SK-N-SH (cell line): ENCODE measurements at regions of chr11 and their contacts with region 1.

Region 1: GRCh38 chr11:66311965-66312548 is 4.8 kb downstream of the CD248 start:
- DNase-seq: peak; percentile 88
- H3K4me3 ChIP-seq: peak overlapping the region; percentile 59 to 70
- H3K27ac ChIP-seq: peak overlapping the region; percentile 94 to 96
- H3K4me1 ChIP-seq: peaks cover 11 to 49% of the 10 kb centered on the region in 2 experiments; a peak in 2 of 4 replicates
- H3K27me3 ChIP-seq: no peaks in the 10 kb centered on the region
- CTCF ChIP-seq: peak; percentile 98
- EP300 ChIP-seq: no peak
- RAD21 ChIP-seq: peak; percentile 97

Region 2: DNA sequence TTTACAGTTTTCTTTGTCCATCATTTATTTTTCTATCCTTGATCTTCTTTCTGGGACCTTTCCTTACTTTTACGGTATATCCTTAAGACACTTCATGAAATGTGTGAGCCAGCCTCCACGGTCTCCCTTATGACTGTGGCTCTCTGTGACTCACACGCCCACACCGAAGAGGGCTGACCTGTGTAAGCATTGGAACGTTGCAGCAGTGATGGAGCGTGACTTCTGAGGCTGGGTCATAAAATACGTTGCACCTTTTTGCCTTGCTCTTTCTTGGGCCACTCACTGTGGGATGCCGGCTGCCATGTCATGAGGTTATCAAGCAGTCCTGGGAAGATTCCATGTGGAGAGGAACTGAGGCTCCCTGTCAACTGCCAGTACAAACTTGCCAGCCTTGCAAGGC is 139.9 kb before region 1 on chr11:
- CTCF ChIA-PET with region 1: no interaction called
- POLR2A ChIA-PET with region 1: no interaction called
- DNase-seq: no peak
- H3K4me3 ChIP-seq: no peak overlapping the region
- H3K27ac ChIP-seq: no peak overlapping the region
- H3K4me1 ChIP-seq: no peaks in the 10 kb centered on the region
- H3K27me3 ChIP-seq: no peaks in the 10 kb centered on the region
- CTCF ChIP-seq: no peak
- EP300 ChIP-seq: no peak
- RAD21 ChIP-seq: no peak

Region 3: GRCh38 chr11:66282468-66283386 is 29.3 kb before region 1 on chr11:
- CTCF ChIA-PET with region 1: interaction called, 63 read pairs
- POLR2A ChIA-PET with region 1: interaction called, 19 read pairs
- DNase-seq: peak; percentile 98
- H3K4me3 ChIP-seq: peak overlapping the region in 1 of 2 experiments; percentile 48; a peak in 2 of 4 replicates
- H3K27ac ChIP-seq: peak overlapping the region; percentile 47 to 57; a peak in 3 of 4 replicates
- H3K4me1 ChIP-seq: peaks cover 0 to 55% of the 10 kb centered on the region in 2 experiments; a peak in 1 of 4 replicates
- H3K27me3 ChIP-seq: no peaks in the 10 kb centered on the region
- CTCF ChIP-seq: peak; percentile 95
- EP300 ChIP-seq: no peak
- RAD21 ChIP-seq: peak; percentile 66

Region 4: DNA sequence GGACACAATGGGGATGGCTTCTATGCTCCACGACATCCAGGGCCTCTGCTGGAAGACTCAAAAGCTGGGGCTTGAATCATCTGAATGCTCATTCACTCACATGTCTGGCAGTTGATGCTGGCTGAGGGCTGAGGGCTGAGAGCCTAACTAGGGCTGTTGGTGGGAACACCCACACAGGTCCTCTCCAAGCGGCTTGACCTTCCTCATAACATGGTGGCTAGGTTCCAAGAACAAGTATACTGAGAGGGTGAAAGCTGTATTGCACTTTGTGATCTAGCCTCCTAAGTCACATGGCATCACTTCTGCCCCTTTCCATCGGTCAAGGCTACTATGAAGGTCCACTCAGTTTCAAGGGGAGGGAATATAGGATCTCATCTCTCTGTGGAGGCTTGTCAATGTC is 12.9 kb before region 1 on chr11:
- CTCF ChIA-PET with region 1: interaction called, 84 read pairs
- POLR2A ChIA-PET with region 1: interaction called, 3 read pairs
- DNase-seq: no peak
- H3K4me3 ChIP-seq: no peak overlapping the region
- H3K27ac ChIP-seq: no peak overlapping the region
- H3K4me1 ChIP-seq: no peaks in the 10 kb centered on the region
- H3K27me3 ChIP-seq: no peaks in the 10 kb centered on the region
- CTCF ChIP-seq: no peak
- EP300 ChIP-seq: no peak
- RAD21 ChIP-seq: no peak

Region 5: DNA sequence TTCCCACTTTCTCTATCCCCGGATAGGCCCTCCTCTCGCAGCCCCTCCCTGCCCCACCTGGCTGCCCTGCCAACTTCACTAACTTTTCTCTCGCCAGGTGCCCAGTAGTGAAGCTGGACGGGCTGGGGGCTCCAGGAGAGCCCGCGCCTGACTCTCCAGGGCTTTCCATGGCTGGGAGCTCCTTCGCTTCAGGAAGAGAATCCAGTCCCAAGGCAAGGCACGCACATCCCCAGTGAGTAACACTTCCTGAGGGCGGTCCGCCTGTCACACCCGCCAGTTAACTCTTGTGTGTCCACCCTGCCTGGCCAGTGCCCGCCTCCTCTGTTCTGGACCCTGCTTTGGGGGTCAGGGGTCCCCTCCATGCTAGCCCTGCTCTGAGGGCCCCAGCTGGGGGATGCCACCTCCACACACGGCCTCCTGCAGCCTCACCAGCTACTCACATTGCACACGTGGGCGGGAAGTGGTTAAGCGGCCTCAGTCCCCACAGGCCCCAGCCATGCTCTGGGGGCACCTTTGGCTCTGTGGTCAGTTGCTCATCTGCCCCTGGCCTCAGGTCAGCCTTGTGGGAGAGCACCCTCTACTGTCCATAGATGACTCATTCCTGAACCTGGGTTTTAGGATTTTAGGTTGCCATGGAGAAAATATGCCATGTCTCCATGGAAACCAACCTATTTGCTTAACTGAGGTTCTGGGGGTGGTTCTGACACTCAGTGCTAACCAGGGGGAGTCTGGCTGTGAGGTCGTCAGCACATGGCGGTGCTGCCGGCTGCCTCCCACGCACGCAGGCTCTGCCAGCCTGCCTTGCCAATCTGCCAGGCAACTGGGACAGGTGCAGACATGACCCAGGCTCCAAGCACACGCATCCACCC is 24.4 kb after region 1 on chr11 and contains the start of gene RIN1:
- CTCF ChIA-PET with region 1: interaction called, 280 read pairs
- POLR2A ChIA-PET with region 1: interaction called, 33 read pairs
- DNase-seq: peak; percentile 94
- H3K4me3 ChIP-seq: peak within 1 kb of the TSS; percentile 68 to 69
- H3K27ac ChIP-seq: peak within 1 kb of the TSS; percentile 94
- H3K4me1 ChIP-seq: peaks cover 27 to 44% of the 10 kb centered on the region in 2 experiments
- H3K27me3 ChIP-seq: no peaks in the 10 kb centered on the region
- CTCF ChIP-seq: peak; percentile 56
- EP300 ChIP-seq: peak; percentile 47 to 78; a peak in 3 of 4 replicates
- RAD21 ChIP-seq: peak; percentile 81
- polyA plus RNA-seq, gene RIN1: 13.0 and 16.9 TPM in 2 replicates

Region 6: GRCh38 chr11:66363805-66364535 is 51.9 kb after region 1 on chr11:
- CTCF ChIA-PET with region 1: interaction called, 27 read pairs
- POLR2A ChIA-PET with region 1: interaction called, 3 read pairs
- DNase-seq: peak; percentile 86
- H3K4me3 ChIP-seq: no peak overlapping the region
- H3K27ac ChIP-seq: no peak overlapping the region
- H3K4me1 ChIP-seq: peaks cover 0 to 7% of the 10 kb centered on the region in 2 experiments; a peak in 1 of 4 replicates
- H3K27me3 ChIP-seq: no peaks in the 10 kb centered on the region
- CTCF ChIP-seq: peak; percentile 73
- EP300 ChIP-seq: no peak
- RAD21 ChIP-seq: no peak